Breast epithelium (tissue), 4 donors: ENCODE measurements at regions of chr2 and their contacts with region 1.

Region 1: GRCh38 chr2:102806250-102806837 is 44.5 kb downstream of the TMEM182 start:
- DNase-seq: peak; percentile 35 to 64
- H3K4me3 ChIP-seq: no peak overlapping the region
- H3K27ac ChIP-seq: no peak overlapping the region
- H3K4me1 ChIP-seq: no peaks in the 10 kb centered on the region
- H3K27me3 ChIP-seq: no peaks in the 10 kb centered on the region
- CTCF ChIP-seq: peak in 2 of 3 donors; percentile 38 to 67
- POLR2A ChIP-seq: no peak

Region 2: GRCh38 chr2:103484906-103485305 is 678.6 kb after region 1 on chr2:
- intact Hi-C with region 1: loop called (anchors 5 kb)
- DNase-seq: no peak
- H3K4me3 ChIP-seq: no peak overlapping the region
- H3K27ac ChIP-seq: no peak overlapping the region
- H3K4me1 ChIP-seq: no peaks in the 10 kb centered on the region
- H3K27me3 ChIP-seq: no peaks in the 10 kb centered on the region
- CTCF ChIP-seq: no peak
- POLR2A ChIP-seq: no peak